GM12878 (cell line): ENCODE measurements at regions of chr7 and their contacts with region 1.

Region 1: GRCh38 chr7:106542550-106543220 is 118.3 kb downstream of the CCDC71L start:
- DNase-seq: peak; percentile 57
- ATAC-seq: peak; percentile 95
- H3K4me3 ChIP-seq: no peak overlapping the region
- H3K27ac ChIP-seq: no peak overlapping the region
- H3K4me1 ChIP-seq: no peaks in the 10 kb centered on the region; the same call in 1 of the 2 replicates
- H3K27me3 ChIP-seq: no peaks in the 10 kb centered on the region
- CTCF ChIP-seq: peak; percentile 70 to 77 (median 74)
- EP300 ChIP-seq: no peak
- POLR2A ChIP-seq: no peak
- RAD21 ChIP-seq: peak; percentile 94

Region 2: GRCh38 chr7:106552645-106553445 is 10.2 kb after region 1 on chr7:
- CTCF ChIA-PET with region 1: interaction called, 40 read pairs
- POLR2A ChIA-PET with region 1: interaction called, 9 read pairs
- RAD21 ChIA-PET with region 1: interaction called, 14 read pairs
- SMC1A ChIA-PET with region 1: interaction called, 21 read pairs
- in situ Hi-C with region 1: no loop called
- intact Hi-C with region 1: no loop called
- DNase-seq: peak; percentile 97
- ATAC-seq: peak; percentile 98
- H3K4me3 ChIP-seq: no peak overlapping the region
- H3K27ac ChIP-seq: peak overlapping the region; percentile 79
- H3K4me1 ChIP-seq: peaks cover 19% of the 10 kb centered on the region
- H3K27me3 ChIP-seq: no peaks in the 10 kb centered on the region
- CTCF ChIP-seq: no peak
- EP300 ChIP-seq: peak; percentile 97 to 100
- POLR2A ChIP-seq: no peak
- RAD21 ChIP-seq: no peak

Region 3: GRCh38 chr7:106644999-106645398 is 102.3 kb after region 1 on chr7:
- CTCF ChIA-PET with region 1: interaction called, 7 read pairs
- POLR2A ChIA-PET with region 1: no interaction called
- RAD21 ChIA-PET with region 1: interaction called, 6 read pairs
- SMC1A ChIA-PET with region 1: interaction called, 10 read pairs
- in situ Hi-C with region 1: no loop called
- intact Hi-C with region 1: no loop called
- DNase-seq: no peak
- ATAC-seq: peak; percentile 89
- H3K4me3 ChIP-seq: no peak overlapping the region
- H3K27ac ChIP-seq: no peak overlapping the region
- H3K4me1 ChIP-seq: no peaks in the 10 kb centered on the region
- H3K27me3 ChIP-seq: no peaks in the 10 kb centered on the region
- CTCF ChIP-seq: no peak
- EP300 ChIP-seq: no peak
- POLR2A ChIP-seq: no peak
- RAD21 ChIP-seq: no peak

Region 4: DNA sequence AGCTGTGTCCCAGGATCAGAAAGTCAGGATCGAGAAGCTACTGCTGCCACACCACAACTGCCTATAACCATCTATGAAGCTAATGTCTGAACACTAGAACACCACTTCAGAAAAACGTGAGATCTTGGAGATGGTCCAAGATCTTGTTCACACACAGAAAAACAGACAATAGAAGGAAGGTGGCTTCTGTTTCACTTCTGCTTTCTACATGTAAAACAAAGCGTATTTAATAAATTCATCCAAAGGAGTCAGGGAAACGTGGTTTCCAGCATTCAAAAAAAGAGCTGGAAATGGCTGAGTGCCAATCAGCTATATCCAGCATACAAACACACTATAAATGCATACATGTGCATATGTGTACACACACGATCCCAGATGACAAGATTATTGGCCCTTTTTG is 188.5 kb after region 1 on chr7:
- CTCF ChIA-PET with region 1: interaction called, 126 read pairs
- POLR2A ChIA-PET with region 1: interaction called, 3 read pairs
- RAD21 ChIA-PET with region 1: interaction called, 91 read pairs
- SMC1A ChIA-PET with region 1: interaction called, 148 read pairs
- in situ Hi-C with region 1: no loop called
- intact Hi-C with region 1: loop called (anchors 1 kb)
- DNase-seq: peak; percentile 91
- ATAC-seq: peak; percentile 95
- H3K4me3 ChIP-seq: no peak overlapping the region
- H3K27ac ChIP-seq: peak overlapping the region; percentile 40; the same call in 1 of the 2 replicates
- H3K4me1 ChIP-seq: peaks cover 17% of the 10 kb centered on the region
- H3K27me3 ChIP-seq: no peaks in the 10 kb centered on the region
- CTCF ChIP-seq: no peak
- EP300 ChIP-seq: peak in 1 of 2 experiments; percentile 80; a peak in 2 of 4 replicates
- POLR2A ChIP-seq: no peak
- RAD21 ChIP-seq: 0 out of 2 replicates have a peak, but pooled peaks have one; percentile 7

Region 5: GRCh38 chr7:106779877-106780276 is 237.2 kb after region 1 on chr7:
- CTCF ChIA-PET with region 1: interaction called, 10 read pairs
- POLR2A ChIA-PET with region 1: no interaction called
- RAD21 ChIA-PET with region 1: interaction called, 3 read pairs
- SMC1A ChIA-PET with region 1: interaction called, 7 read pairs
- in situ Hi-C with region 1: no loop called
- intact Hi-C with region 1: loop called (anchors 1 kb)
- DNase-seq: no peak
- ATAC-seq: peak; percentile 92
- H3K4me3 ChIP-seq: no peak overlapping the region
- H3K27ac ChIP-seq: no peak overlapping the region
- H3K4me1 ChIP-seq: no peaks in the 10 kb centered on the region
- H3K27me3 ChIP-seq: peaks cover 0 to 2% of the 10 kb centered on the region in 2 experiments; a peak in 1 of 4 replicates
- CTCF ChIP-seq: peak; percentile 31 to 44 (median 31); a peak in 5 of 6 replicates
- EP300 ChIP-seq: no peak
- POLR2A ChIP-seq: no peak
- RAD21 ChIP-seq: peak; percentile 41